ENCODE measurements at regions of chr12 and their contacts with region 1.

Region 1: DNA sequence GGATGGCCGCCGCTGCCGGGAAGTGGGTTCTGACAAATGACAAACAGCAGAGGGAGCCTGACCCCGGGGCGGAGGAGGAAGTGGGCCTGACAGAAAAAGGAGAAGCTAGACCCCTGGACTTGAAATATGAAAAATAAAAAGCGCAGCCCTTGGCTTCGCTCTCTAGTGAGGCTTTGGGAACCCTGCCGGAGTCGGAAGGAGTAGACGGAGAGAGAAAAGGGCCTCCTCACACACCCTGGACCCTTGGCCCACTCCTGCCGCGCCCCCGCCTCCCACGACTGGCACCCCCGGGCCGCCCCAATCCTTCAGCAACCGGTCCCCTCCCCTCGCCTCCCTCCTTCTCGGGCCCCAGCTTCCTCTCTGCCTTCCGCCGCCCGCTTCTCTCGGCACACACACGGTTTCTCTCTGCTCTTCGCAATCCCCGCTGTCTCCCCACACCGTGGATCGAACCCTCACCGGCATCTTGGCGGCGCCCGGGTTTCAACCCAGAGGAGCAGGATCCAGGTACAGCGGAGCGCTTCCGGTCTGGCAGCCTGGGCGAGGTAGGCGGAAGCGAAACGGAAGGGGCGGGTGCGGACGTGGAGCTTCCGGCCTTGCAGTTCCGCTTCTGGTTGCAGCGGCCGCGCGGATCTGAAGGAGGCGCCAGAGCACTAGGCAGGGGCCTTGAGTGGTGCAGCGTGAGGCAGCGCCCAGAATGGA is at the start of gene ARPC3:
- DNase-seq: peak; percentile 90 to 93
- H3K4me3 ChIP-seq: peak within 1 kb of the TSS; percentile 94
- H3K27ac ChIP-seq: peak within 1 kb of the TSS; percentile 61
- H3K4me1 ChIP-seq: 0 out of 2 replicates have a peak, but pooled peaks cover 4% of the 10 kb centered on the region
- H3K27me3 ChIP-seq: no peaks in the 10 kb centered on the region
- CTCF ChIP-seq: peak; percentile 77
- total RNA-seq, gene ARPC3: 167 and 229 TPM in 2 replicates

Region 2: DNA sequence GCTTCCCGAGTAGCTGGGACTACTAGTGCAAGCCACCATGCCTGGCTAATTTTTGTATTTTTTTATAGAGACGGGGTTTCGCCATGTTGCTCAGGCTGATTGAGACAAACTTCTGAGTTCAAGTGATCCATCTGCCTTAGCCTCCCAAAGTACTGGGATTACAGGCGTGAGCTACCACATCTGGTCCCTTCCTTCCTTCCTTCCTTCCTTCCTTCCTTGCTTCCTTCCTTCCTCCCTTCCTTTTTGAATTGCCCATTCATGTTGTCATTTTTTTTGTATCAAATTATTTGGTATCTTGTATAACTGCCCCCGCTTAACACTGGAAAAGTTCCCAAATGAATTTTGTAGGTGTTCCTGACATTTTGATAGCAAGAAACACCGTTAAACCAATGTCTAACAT is 63.9 kb after region 1 on chr12:
- CTCF ChIA-PET with region 1: interaction called, 6 read pairs
- POLR2A ChIA-PET with region 1: no interaction called
- intact Hi-C with region 1: loop called (anchors 5 kb)
- DNase-seq: no peak
- H3K4me3 ChIP-seq: no peak overlapping the region
- H3K27ac ChIP-seq: no peak overlapping the region
- H3K4me1 ChIP-seq: no peaks in the 10 kb centered on the region
- H3K27me3 ChIP-seq: no peaks in the 10 kb centered on the region
- CTCF ChIP-seq: no peak

Region 3: GRCh38 chr12:110606253-110606611 is 156.3 kb after region 1 on chr12:
- CTCF ChIA-PET with region 1: interaction called, 17 read pairs
- POLR2A ChIA-PET with region 1: no interaction called
- intact Hi-C with region 1: loop called (anchors 1 kb)
- DNase-seq: no peak
- H3K4me3 ChIP-seq: no peak overlapping the region
- H3K27ac ChIP-seq: no peak overlapping the region
- H3K4me1 ChIP-seq: peaks cover 8% of the 10 kb centered on the region; the same call in 1 of the 2 replicates
- H3K27me3 ChIP-seq: no peaks in the 10 kb centered on the region
- CTCF ChIP-seq: no peak

Region 4: DNA sequence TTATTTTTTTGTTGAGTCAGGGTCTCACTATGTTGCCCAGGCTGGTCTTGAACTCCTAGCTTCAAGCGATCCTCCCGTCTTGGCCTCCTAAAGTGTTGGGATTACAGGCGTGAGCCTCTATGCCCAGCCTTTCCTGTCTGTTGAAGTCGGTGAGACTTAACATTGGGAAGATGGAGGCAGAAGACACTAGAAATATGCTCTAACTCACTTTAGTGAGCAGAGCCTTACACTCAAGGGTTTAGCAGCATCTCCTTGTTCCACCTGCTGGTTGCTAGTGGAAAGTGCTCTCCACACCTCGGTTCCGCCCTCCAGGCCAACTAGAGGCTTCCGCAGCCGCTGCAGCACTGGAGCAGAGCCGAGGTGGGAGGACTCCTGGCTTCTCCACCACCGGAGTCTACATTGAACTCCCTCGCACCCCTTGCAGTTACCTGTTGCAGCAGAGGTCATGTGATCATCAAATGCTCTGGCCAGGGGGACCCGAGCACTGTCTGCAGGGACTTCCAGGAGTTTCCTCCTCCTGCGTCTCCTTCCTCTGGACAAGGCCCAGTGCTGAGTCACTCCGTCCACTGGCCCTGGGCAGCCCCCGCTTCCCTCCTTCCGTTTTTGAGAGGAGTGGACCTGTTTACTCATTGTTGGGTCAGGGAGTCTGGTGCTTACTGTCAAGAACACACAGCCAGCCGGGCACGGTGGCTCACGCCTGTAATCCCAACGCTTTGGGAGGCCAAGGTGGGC is 248.4 kb after region 1 on chr12:
- CTCF ChIA-PET with region 1: no interaction called
- POLR2A ChIA-PET with region 1: no interaction called
- intact Hi-C with region 1: loop called (anchors 5 kb)
- DNase-seq: peak; percentile 62 to 70
- H3K4me3 ChIP-seq: no peak overlapping the region
- H3K27ac ChIP-seq: no peak overlapping the region
- H3K4me1 ChIP-seq: no peaks in the 10 kb centered on the region
- H3K27me3 ChIP-seq: no peaks in the 10 kb centered on the region
- CTCF ChIP-seq: peak; percentile 66

Measured in PC-9 (cell line).